CD4-positive, alpha-beta T cell (primary cell): ENCODE measurements at regions of chr2 and their contacts with region 1.

Region 1: GRCh38 chr2:126776692-126777619 is 121.0 kb downstream of the GYPC start:
- DNase-seq: peak; percentile 63 to 88 (median 78)
- ATAC-seq: peak; percentile 89
- H3K4me3 ChIP-seq: peak overlapping the region; percentile 88
- H3K4me3 Mint-ChIP-seq: peak overlapping the region; percentile 89
- H3K27ac ChIP-seq: peak overlapping the region in 1 of 2 donors; percentile 40
- H3K27ac Mint-ChIP-seq: peak overlapping the region; percentile 58
- H3K4me1 ChIP-seq: peaks cover 16% of the 10 kb centered on the region
- H3K4me1 Mint-ChIP-seq: peaks cover 17% of the 10 kb centered on the region
- H3K27me3 ChIP-seq: peaks cover 0 to 4% of the 10 kb centered on the region in 2 experiments
- H3K27me3 Mint-ChIP-seq: peaks cover 3% of the 10 kb centered on the region
- CTCF ChIP-seq: peak; percentile 98

Region 2: GRCh38 chr2:126359494-126359893 is 417.5 kb before region 1 on chr2:
- CTCF ChIA-PET with region 1: interaction called, 4 read pairs
- POLR2A ChIA-PET with region 1: no interaction called
- intact Hi-C with region 1: loop called (anchors 5 kb)
- DNase-seq: peak in 3 of 14 experiments; percentile 23 to 25 (median 25)
- ATAC-seq: no peak
- H3K4me3 ChIP-seq: no peak overlapping the region
- H3K4me3 Mint-ChIP-seq: no peak overlapping the region
- H3K27ac ChIP-seq: no peak overlapping the region
- H3K27ac Mint-ChIP-seq: no peak overlapping the region
- H3K4me1 ChIP-seq: no peaks in the 10 kb centered on the region
- H3K4me1 Mint-ChIP-seq: no peaks in the 10 kb centered on the region
- H3K27me3 ChIP-seq: no peaks in the 10 kb centered on the region
- H3K27me3 Mint-ChIP-seq: peaks cover 16% of the 10 kb centered on the region
- CTCF ChIP-seq: peak; percentile 10

Region 3: GRCh38 chr2:126399001-126399400 is 378.0 kb before region 1 on chr2:
- CTCF ChIA-PET with region 1: no interaction called
- POLR2A ChIA-PET with region 1: no interaction called
- intact Hi-C with region 1: loop called in 1 of 2 experiments (anchors 2 kb)
- DNase-seq: peak in 7 of 14 experiments; percentile 0 to 31 (median 25)
- ATAC-seq: no peak
- H3K4me3 ChIP-seq: no peak overlapping the region
- H3K4me3 Mint-ChIP-seq: no peak overlapping the region
- H3K27ac ChIP-seq: no peak overlapping the region
- H3K27ac Mint-ChIP-seq: no peak overlapping the region
- H3K4me1 ChIP-seq: no peaks in the 10 kb centered on the region
- H3K4me1 Mint-ChIP-seq: no peaks in the 10 kb centered on the region
- H3K27me3 ChIP-seq: no peaks in the 10 kb centered on the region
- H3K27me3 Mint-ChIP-seq: peaks cover 32% of the 10 kb centered on the region
- CTCF ChIP-seq: no peak

Region 4: GRCh38 chr2:126527836-126528507 is 249.0 kb before region 1 on chr2:
- CTCF ChIA-PET with region 1: interaction called, 52 read pairs
- POLR2A ChIA-PET with region 1: interaction called, 14 read pairs
- intact Hi-C with region 1: loop called (anchors 1 kb)
- DNase-seq: peak; percentile 54 to 83 (median 68)
- ATAC-seq: peak; percentile 68
- H3K4me3 ChIP-seq: no peak overlapping the region
- H3K4me3 Mint-ChIP-seq: no peak overlapping the region
- H3K27ac ChIP-seq: no peak overlapping the region
- H3K27ac Mint-ChIP-seq: no peak overlapping the region
- H3K4me1 ChIP-seq: no peaks in the 10 kb centered on the region
- H3K4me1 Mint-ChIP-seq: no peaks in the 10 kb centered on the region
- H3K27me3 ChIP-seq: no peaks in the 10 kb centered on the region
- H3K27me3 Mint-ChIP-seq: no peaks in the 10 kb centered on the region
- CTCF ChIP-seq: peak; percentile 83

Region 5: DNA sequence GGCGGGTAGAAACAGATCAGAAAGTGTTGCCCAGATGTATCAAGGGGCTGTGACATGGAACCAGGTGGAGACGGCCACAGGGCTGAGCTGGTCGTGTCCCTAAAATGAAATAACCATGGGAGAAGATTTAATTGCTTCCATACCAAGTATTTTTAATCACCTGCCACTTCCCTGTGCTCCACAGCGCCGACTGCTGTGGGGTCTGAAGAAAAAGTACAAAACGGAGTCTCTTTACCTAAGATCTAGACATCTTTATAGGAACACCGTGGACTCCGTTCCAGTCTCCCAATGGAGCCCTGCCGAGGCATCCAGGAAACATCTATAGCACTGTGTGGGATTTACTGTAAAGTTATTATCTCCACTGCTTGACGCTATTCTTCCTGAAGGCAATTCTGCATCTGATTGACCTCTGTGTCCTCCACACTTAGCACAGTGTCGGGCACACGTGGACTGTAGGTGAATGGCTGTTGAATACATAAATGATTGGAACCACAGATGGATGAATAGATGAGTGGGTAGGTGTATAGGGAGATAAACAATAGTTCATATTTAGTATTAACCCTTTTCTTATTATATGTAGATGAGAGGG is 142.6 kb before region 1 on chr2:
- CTCF ChIA-PET with region 1: no interaction called
- POLR2A ChIA-PET with region 1: no interaction called
- intact Hi-C with region 1: loop called (anchors 1 to 5 kb)
- DNase-seq: peak in 12 of 14 experiments; percentile 6 to 58 (median 32)
- ATAC-seq: peak; percentile 43
- H3K4me3 ChIP-seq: no peak overlapping the region
- H3K4me3 Mint-ChIP-seq: no peak overlapping the region
- H3K27ac ChIP-seq: no peak overlapping the region
- H3K27ac Mint-ChIP-seq: no peak overlapping the region
- H3K4me1 ChIP-seq: no peaks in the 10 kb centered on the region
- H3K4me1 Mint-ChIP-seq: peaks cover 7% of the 10 kb centered on the region
- H3K27me3 ChIP-seq: no peaks in the 10 kb centered on the region
- H3K27me3 Mint-ChIP-seq: no peaks in the 10 kb centered on the region
- CTCF ChIP-seq: peak; percentile 78

Region 6: GRCh38 chr2:126657636-126658318 is 119.2 kb before region 1 on chr2:
- CTCF ChIA-PET with region 1: interaction called, 3 read pairs
- POLR2A ChIA-PET with region 1: interaction called, 13 read pairs
- intact Hi-C with region 1: loop called (anchors 2 to 5 kb)
- DNase-seq: peak; percentile 50 to 90 (median 74)
- ATAC-seq: peak; percentile 59
- H3K4me3 ChIP-seq: peak overlapping the region; percentile 86
- H3K4me3 Mint-ChIP-seq: peak overlapping the region; percentile 100
- H3K27ac ChIP-seq: peak overlapping the region; percentile 80 to 81
- H3K27ac Mint-ChIP-seq: peak overlapping the region; percentile 98
- H3K4me1 ChIP-seq: peaks cover 66% of the 10 kb centered on the region
- H3K4me1 Mint-ChIP-seq: peaks cover 78% of the 10 kb centered on the region
- H3K27me3 ChIP-seq: no peaks in the 10 kb centered on the region
- H3K27me3 Mint-ChIP-seq: no peaks in the 10 kb centered on the region
- CTCF ChIP-seq: no peak

Region 7: DNA sequence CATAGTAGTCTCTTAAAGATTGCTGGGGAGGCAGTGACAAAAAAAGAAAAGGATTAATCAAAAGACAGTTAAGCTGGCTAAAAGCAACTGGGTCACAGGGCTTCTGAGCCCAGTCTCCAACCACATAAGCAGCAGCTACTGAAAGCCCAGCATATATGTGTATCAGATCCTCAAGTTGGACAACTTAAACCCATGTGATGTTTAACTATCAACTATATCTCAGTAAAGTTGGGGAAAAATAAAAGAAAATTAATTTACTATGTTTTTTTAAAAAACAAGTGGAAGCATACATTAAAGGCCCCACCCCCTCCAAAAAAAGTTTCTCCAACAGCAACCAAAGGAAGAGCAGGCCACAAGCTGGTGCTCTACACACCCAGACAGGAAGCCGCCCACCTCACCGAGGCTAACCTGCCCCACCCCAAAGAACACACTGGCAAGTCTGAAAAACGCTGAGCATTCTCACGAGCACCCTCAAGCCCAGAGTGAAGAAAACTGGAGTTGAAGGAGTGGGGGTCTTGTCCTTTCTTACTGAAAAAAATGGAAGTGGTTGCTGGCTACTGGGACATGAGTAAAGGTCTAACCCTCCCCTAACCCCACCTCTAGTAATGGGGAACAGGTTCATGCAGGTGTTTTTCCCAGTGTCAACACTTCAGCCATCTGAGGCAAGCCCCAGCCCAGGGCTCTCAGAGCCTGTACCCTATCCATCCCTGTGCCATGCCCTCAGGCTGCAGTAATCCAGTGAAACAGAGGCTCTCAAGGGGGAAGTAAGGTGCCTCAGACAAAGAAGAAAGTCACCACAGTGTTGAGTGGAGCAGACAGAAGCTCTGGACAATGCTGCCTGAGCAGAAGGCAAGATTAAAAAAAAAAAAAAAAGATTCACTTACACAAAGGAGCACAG is 14.7 kb before region 1 on chr2:
- CTCF ChIA-PET with region 1: interaction called, 6 read pairs
- POLR2A ChIA-PET with region 1: interaction called, 14 read pairs
- intact Hi-C with region 1: loop called in 1 of 2 experiments (anchors 1 kb)
- DNase-seq: peak in 12 of 14 experiments; percentile 21 to 79 (median 46)
- ATAC-seq: peak; percentile 94
- H3K4me3 ChIP-seq: peak overlapping the region; percentile 20
- H3K4me3 Mint-ChIP-seq: peak overlapping the region; percentile 73
- H3K27ac ChIP-seq: peak overlapping the region; percentile 60 to 61
- H3K27ac Mint-ChIP-seq: peak overlapping the region; percentile 87
- H3K4me1 ChIP-seq: peaks cover 45% of the 10 kb centered on the region
- H3K4me1 Mint-ChIP-seq: peaks cover 81% of the 10 kb centered on the region
- H3K27me3 ChIP-seq: no peaks in the 10 kb centered on the region
- H3K27me3 Mint-ChIP-seq: no peaks in the 10 kb centered on the region
- CTCF ChIP-seq: no peak

Region 8: GRCh38 chr2:127134833-127135830 is 358.2 kb after region 1 on chr2:
- CTCF ChIA-PET with region 1: no interaction called
- POLR2A ChIA-PET with region 1: no interaction called
- intact Hi-C with region 1: no loop called
- DNase-seq: peak in 2 of 14 experiments; percentile 31 to 36
- ATAC-seq: no peak
- H3K4me3 ChIP-seq: no peak overlapping the region
- H3K4me3 Mint-ChIP-seq: no peak overlapping the region
- H3K27ac ChIP-seq: no peak overlapping the region
- H3K27ac Mint-ChIP-seq: no peak overlapping the region
- H3K4me1 ChIP-seq: no peaks in the 10 kb centered on the region
- H3K4me1 Mint-ChIP-seq: no peaks in the 10 kb centered on the region
- H3K27me3 ChIP-seq: no peaks in the 10 kb centered on the region
- H3K27me3 Mint-ChIP-seq: no peaks in the 10 kb centered on the region
- CTCF ChIP-seq: no peak